ENCODE measurements at regions of chr4 and their contacts with region 1.

Region 1: GRCh38 chr4:77156533-77156911 is 485 bp upstream of the CCNG2 start:
- DNase-seq: peak; percentile 100
- ATAC-seq: peak; percentile 83
- H3K4me3 ChIP-seq: peak overlapping the region; percentile 81 to 96 (median 87)
- H3K4me3 Mint-ChIP-seq: peak overlapping the region; percentile 97
- H3K27ac ChIP-seq: peak overlapping the region; percentile 95
- H3K27ac Mint-ChIP-seq: peak overlapping the region; percentile 99
- H3K4me1 ChIP-seq: peaks cover 59 to 63% of the 10 kb centered on the region in 2 donors
- H3K4me1 Mint-ChIP-seq: peaks cover 70% of the 10 kb centered on the region
- H3K27me3 ChIP-seq: no peaks in the 10 kb centered on the region
- H3K27me3 Mint-ChIP-seq: no peaks in the 10 kb centered on the region
- CTCF ChIP-seq: no peak

Region 2: GRCh38 chr4:76148142-76148865 is 1008.2 kb before region 1 on chr4 and contains the start of gene NUP54:
- CTCF ChIA-PET with region 1: no interaction called
- POLR2A ChIA-PET with region 1: no interaction called
- intact Hi-C with region 1: loop called (anchors 5 kb)
- DNase-seq: peak; percentile 95
- ATAC-seq: peak; percentile 98
- H3K4me3 ChIP-seq: peak within 1 kb of the TSS; percentile 71 to 98 (median 97)
- H3K4me3 Mint-ChIP-seq: peak within 1 kb of the TSS; percentile 98
- H3K27ac ChIP-seq: peak within 1 kb of the TSS; percentile 77 to 91
- H3K27ac Mint-ChIP-seq: peak within 1 kb of the TSS; percentile 89
- H3K4me1 ChIP-seq: peaks cover 22 to 28% of the 10 kb centered on the region in 2 donors
- H3K4me1 Mint-ChIP-seq: peaks cover 35% of the 10 kb centered on the region
- H3K27me3 ChIP-seq: no peaks in the 10 kb centered on the region
- H3K27me3 Mint-ChIP-seq: no peaks in the 10 kb centered on the region
- CTCF ChIP-seq: no peak
- total RNA-seq, gene NUP54: 71.0 and 71.4 TPM in 2 replicates

Region 3: GRCh38 chr4:77075869-77076799 is 80.4 kb before region 1 on chr4 and contains the start of gene CCNI:
- CTCF ChIA-PET with region 1: interaction called, 3 read pairs
- POLR2A ChIA-PET with region 1: interaction called, 22 read pairs
- intact Hi-C with region 1: loop called (anchors 1 kb)
- DNase-seq: peak; percentile 100
- ATAC-seq: peak; percentile 75
- H3K4me3 ChIP-seq: peak within 1 kb of the TSS; percentile 68 to 98 (median 81)
- H3K4me3 Mint-ChIP-seq: no peak within 1 kb of the TSS
- H3K27ac ChIP-seq: peak within 1 kb of the TSS; percentile 97 to 100
- H3K27ac Mint-ChIP-seq: peak within 1 kb of the TSS; percentile 100
- H3K4me1 ChIP-seq: peaks cover 48 to 52% of the 10 kb centered on the region in 2 donors
- H3K4me1 Mint-ChIP-seq: peaks cover 46% of the 10 kb centered on the region
- H3K27me3 ChIP-seq: no peaks in the 10 kb centered on the region
- H3K27me3 Mint-ChIP-seq: no peaks in the 10 kb centered on the region
- CTCF ChIP-seq: no peak
- total RNA-seq, gene CCNI: 314 and 328 TPM in 2 replicates

Region 4: GRCh38 chr4:77126809-77127208 is 29.7 kb before region 1 on chr4:
- CTCF ChIA-PET with region 1: interaction called, 106 read pairs
- POLR2A ChIA-PET with region 1: interaction called, 34 read pairs
- intact Hi-C with region 1: loop called (anchors 1 kb)
- DNase-seq: peak; percentile 72
- ATAC-seq: peak; percentile 83
- H3K4me3 ChIP-seq: peak overlapping the region in 1 of 5 experiments; percentile 31
- H3K4me3 Mint-ChIP-seq: peak overlapping the region; percentile 59
- H3K27ac ChIP-seq: peak overlapping the region; percentile 81 to 90
- H3K27ac Mint-ChIP-seq: peak overlapping the region; percentile 96
- H3K4me1 ChIP-seq: peaks cover 52 to 66% of the 10 kb centered on the region in 2 donors
- H3K4me1 Mint-ChIP-seq: peaks cover 68% of the 10 kb centered on the region
- H3K27me3 ChIP-seq: no peaks in the 10 kb centered on the region
- H3K27me3 Mint-ChIP-seq: no peaks in the 10 kb centered on the region
- CTCF ChIP-seq: no peak

Region 5: GRCh38 chr4:77203380-77204197 is 47.1 kb after region 1 on chr4:
- CTCF ChIA-PET with region 1: interaction called, 67 read pairs
- POLR2A ChIA-PET with region 1: interaction called, 4 read pairs
- intact Hi-C with region 1: loop called (anchors 2 kb)
- DNase-seq: peak; percentile 85
- ATAC-seq: peak; percentile 83
- H3K4me3 ChIP-seq: no peak overlapping the region
- H3K4me3 Mint-ChIP-seq: no peak overlapping the region
- H3K27ac ChIP-seq: no peak overlapping the region
- H3K27ac Mint-ChIP-seq: no peak overlapping the region
- H3K4me1 ChIP-seq: peaks cover 7% of the 10 kb centered on the region in 2 donors
- H3K4me1 Mint-ChIP-seq: peaks cover 9% of the 10 kb centered on the region
- H3K27me3 ChIP-seq: no peaks in the 10 kb centered on the region
- H3K27me3 Mint-ChIP-seq: no peaks in the 10 kb centered on the region
- CTCF ChIP-seq: peak; percentile 93

Region 6: GRCh38 chr4:78938868-78939666 is 1782.5 kb after region 1 on chr4 and contains the start of gene PAQR3:
- CTCF ChIA-PET with region 1: no interaction called
- POLR2A ChIA-PET with region 1: no interaction called
- intact Hi-C with region 1: loop called (anchors 5 kb)
- DNase-seq: peak; percentile 91
- ATAC-seq: peak; percentile 98
- H3K4me3 ChIP-seq: peak within 1 kb of the TSS; percentile 74 to 88 (median 85)
- H3K4me3 Mint-ChIP-seq: peak within 1 kb of the TSS; percentile 91
- H3K27ac ChIP-seq: peak within 1 kb of the TSS; percentile 45 to 75
- H3K27ac Mint-ChIP-seq: peak within 1 kb of the TSS; percentile 79
- H3K4me1 ChIP-seq: peaks cover 12 to 20% of the 10 kb centered on the region in 2 donors
- H3K4me1 Mint-ChIP-seq: peaks cover 26% of the 10 kb centered on the region
- H3K27me3 ChIP-seq: no peaks in the 10 kb centered on the region
- H3K27me3 Mint-ChIP-seq: peaks cover 3% of the 10 kb centered on the region
- CTCF ChIP-seq: no peak
- total RNA-seq, gene PAQR3: 12.6 and 13.5 TPM in 2 replicates